ENCODE measurements at regions of chr21 and their contacts with region 1.

Region 1: GRCh38 chr21:42145569-42146272 is 73.2 kb upstream of the ABCG1 start:
- DNase-seq: peak; percentile 81
- ATAC-seq: peak; percentile 71
- H3K4me3 Mint-ChIP-seq: no peak overlapping the region
- H3K27ac Mint-ChIP-seq: peak overlapping the region; percentile 67
- H3K4me1 Mint-ChIP-seq: peaks cover 10% of the 10 kb centered on the region
- H3K27me3 Mint-ChIP-seq: peaks cover 8% of the 10 kb centered on the region

Region 2: GRCh38 chr21:42187976-42188653 is 42.4 kb after region 1 on chr21:
- CTCF ChIA-PET with region 1: interaction called, 22 read pairs
- POLR2A ChIA-PET with region 1: no interaction called
- DNase-seq: peak; percentile 93
- ATAC-seq: peak; percentile 95
- H3K4me3 Mint-ChIP-seq: peak overlapping the region; percentile 53
- H3K27ac Mint-ChIP-seq: peak overlapping the region; percentile 94
- H3K4me1 Mint-ChIP-seq: peaks cover 76% of the 10 kb centered on the region
- H3K27me3 Mint-ChIP-seq: peaks cover 6% of the 10 kb centered on the region

Region 3: DNA sequence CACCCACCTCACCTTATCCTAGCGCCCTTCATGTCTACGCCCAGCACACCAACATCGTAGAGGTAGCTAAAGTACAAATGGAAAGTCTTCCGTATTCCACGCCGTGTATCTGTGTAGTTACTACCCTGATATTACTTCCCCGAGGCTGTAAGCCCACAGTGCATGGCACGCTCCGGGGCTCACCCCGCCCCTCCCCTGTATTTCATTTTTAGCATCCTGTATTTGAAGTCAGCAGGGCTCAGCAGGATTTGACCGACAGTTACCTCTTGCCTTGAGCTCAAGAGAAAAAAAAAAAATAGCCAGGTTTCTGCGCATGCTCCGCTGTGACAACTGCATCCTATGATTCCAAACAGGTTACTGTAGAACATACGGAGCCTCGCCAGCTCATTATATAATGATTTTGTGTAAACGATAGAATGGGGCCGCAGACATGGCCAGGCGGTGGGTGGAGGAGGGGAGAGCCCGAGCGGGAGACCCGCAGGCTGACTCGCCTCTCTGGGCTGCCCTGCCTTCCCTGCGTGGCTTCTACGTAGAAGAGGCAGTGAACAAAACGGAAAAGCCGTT is 74.5 kb after region 1 on chr21:
- CTCF ChIA-PET with region 1: interaction called, 20 read pairs
- POLR2A ChIA-PET with region 1: no interaction called
- DNase-seq: peak; percentile 84
- ATAC-seq: peak; percentile 77
- H3K4me3 Mint-ChIP-seq: peak overlapping the region; percentile 82
- H3K27ac Mint-ChIP-seq: peak overlapping the region; percentile 78
- H3K4me1 Mint-ChIP-seq: peaks cover 16% of the 10 kb centered on the region
- H3K27me3 Mint-ChIP-seq: no peaks in the 10 kb centered on the region

Region 4: DNA sequence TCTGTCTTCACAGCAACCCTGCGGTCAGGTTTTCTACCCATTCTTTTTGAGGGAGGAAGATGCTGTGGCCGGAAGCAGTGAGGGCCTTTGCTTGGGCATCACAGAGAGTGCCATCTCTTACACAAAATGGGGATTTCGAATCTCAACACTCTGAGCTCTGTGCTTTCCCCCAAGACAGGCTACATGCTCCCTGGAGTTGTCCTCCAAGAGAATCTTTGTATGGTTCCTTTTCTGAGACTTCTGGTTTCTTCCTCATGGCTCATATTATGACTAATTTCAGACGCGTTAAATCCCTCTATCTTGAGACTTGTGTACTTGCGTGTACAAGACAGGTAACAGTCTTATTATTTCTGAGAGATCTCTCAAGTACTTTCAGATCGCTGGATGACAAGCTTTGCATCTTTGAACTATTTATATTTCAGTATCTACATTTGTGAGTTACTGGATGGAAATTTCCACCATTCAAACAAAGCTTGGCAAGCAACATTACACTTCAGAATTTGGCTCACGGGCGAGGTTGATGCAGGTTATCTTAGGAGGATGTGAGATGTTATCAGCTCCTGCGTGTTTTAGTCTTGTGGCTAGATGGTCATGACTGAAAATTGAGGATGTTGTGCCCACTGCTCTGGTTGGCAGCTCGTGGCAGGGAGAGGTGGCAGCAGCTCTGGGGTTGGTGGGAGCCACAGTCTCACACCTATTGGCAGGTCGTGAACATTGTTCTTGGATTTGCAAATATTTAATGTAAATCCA is 92.6 kb after region 1 on chr21:
- CTCF ChIA-PET with region 1: interaction called, 32 read pairs
- POLR2A ChIA-PET with region 1: interaction called, 3 read pairs
- DNase-seq: peak; percentile 68
- ATAC-seq: peak; percentile 41
- H3K4me3 Mint-ChIP-seq: peak overlapping the region; percentile 47
- H3K27ac Mint-ChIP-seq: peak overlapping the region; percentile 75
- H3K4me1 Mint-ChIP-seq: peaks cover 62% of the 10 kb centered on the region
- H3K27me3 Mint-ChIP-seq: no peaks in the 10 kb centered on the region

Region 5: GRCh38 chr21:42258153-42258884 is 112.6 kb after region 1 on chr21:
- CTCF ChIA-PET with region 1: interaction called, 138 read pairs
- POLR2A ChIA-PET with region 1: interaction called, 4 read pairs
- DNase-seq: peak; percentile 87
- ATAC-seq: peak; percentile 92
- H3K4me3 Mint-ChIP-seq: no peak overlapping the region
- H3K27ac Mint-ChIP-seq: no peak overlapping the region
- H3K4me1 Mint-ChIP-seq: peaks cover 18% of the 10 kb centered on the region
- H3K27me3 Mint-ChIP-seq: no peaks in the 10 kb centered on the region

Region 6: GRCh38 chr21:42337830-42338728 is 192.4 kb after region 1 on chr21:
- CTCF ChIA-PET with region 1: interaction called, 15 read pairs
- POLR2A ChIA-PET with region 1: no interaction called
- DNase-seq: peak; percentile 88
- ATAC-seq: peak; percentile 99
- H3K4me3 Mint-ChIP-seq: no peak overlapping the region
- H3K27ac Mint-ChIP-seq: peak overlapping the region; percentile 49
- H3K4me1 Mint-ChIP-seq: peaks cover 11% of the 10 kb centered on the region
- H3K27me3 Mint-ChIP-seq: peaks cover 18% of the 10 kb centered on the region

Measured in activated CD8-positive, alpha-beta T cell treated with anti-CD3 and anti-CD28 coated beads, Interleukin-2, amount 10 ng/mL, durations not matched to agents 7 days and 5 days (primary cell).